Activated CD4-positive, alpha-beta T cell treated with anti-CD3 and anti-CD28 coated beads for 36 hours (primary cell): ENCODE measurements at regions of chr17 and their contacts with region 1.

Region 1: GRCh38 chr17:48636177-48637018 is 10.2 kb upstream of the HOXB9 start:
- DNase-seq: peak; percentile 91
- ATAC-seq: peak; percentile 95
- H3K4me3 Mint-ChIP-seq: no peak overlapping the region
- H3K27ac Mint-ChIP-seq: no peak overlapping the region
- H3K4me1 Mint-ChIP-seq: no peaks in the 10 kb centered on the region
- H3K27me3 Mint-ChIP-seq: peaks cover 74% of the 10 kb centered on the region

Region 2: GRCh38 chr17:48625495-48626244 is 10.7 kb before region 1 on chr17:
- CTCF ChIA-PET with region 1: interaction called, 32 read pairs
- POLR2A ChIA-PET with region 1: interaction called, 6 read pairs
- intact Hi-C with region 1: no loop called
- DNase-seq: peak; percentile 63
- ATAC-seq: peak; percentile 73
- H3K4me3 Mint-ChIP-seq: peak overlapping the region; percentile 74
- H3K27ac Mint-ChIP-seq: peak overlapping the region; percentile 57
- H3K4me1 Mint-ChIP-seq: peaks cover 10% of the 10 kb centered on the region
- H3K27me3 Mint-ChIP-seq: peaks cover 75% of the 10 kb centered on the region